Naive thymus-derived CD4-positive, alpha-beta T cell (primary cell): ENCODE measurements at regions of chr11 and their contacts with region 1.

Region 1: DNA sequence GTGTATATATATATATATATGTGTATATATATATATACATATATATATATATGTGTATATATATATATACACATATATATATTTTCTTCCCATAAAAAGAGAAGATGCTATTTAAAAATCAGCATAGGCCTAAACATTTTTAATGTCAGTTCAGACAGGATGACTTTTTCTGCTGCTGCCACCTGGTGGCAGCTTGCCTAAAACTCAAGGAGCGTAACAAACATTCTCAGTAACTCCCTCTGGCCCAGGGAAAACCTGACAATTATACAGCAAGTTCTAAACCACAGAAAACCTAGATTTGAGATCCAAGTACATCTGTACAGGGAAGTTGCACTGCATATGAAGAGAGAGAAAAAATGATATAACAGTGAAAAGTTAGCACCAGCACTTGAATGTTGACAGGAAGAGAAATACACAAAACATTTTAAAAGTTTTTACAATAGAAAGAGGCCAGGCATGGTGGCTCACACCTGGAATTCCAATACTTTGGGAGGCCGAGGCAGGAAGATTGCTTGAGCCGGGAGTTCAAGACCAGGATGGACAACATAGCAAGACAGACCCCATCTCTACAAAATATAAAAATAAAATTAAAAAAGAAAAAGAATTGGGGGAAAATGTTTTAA is 16.6 kb downstream of the OR8A1 start:
- DNase-seq: peak in 7 of 9 donors; percentile 7 to 35 (median 24)
- ATAC-seq: peak; percentile 45
- H3K4me3 ChIP-seq: no peak overlapping the region
- H3K4me3 Mint-ChIP-seq: no peak overlapping the region
- H3K27ac ChIP-seq: no peak overlapping the region
- H3K27ac Mint-ChIP-seq: no peak overlapping the region
- H3K4me1 ChIP-seq: no peaks in the 10 kb centered on the region
- H3K4me1 Mint-ChIP-seq: peaks cover 0 to 2% (median 0%) of the 10 kb centered on the region in 7 donors
- H3K27me3 ChIP-seq: no peaks in the 10 kb centered on the region
- H3K27me3 Mint-ChIP-seq: peaks cover 17 to 39% (median 27%) of the 10 kb centered on the region in 5 donors

Region 2: GRCh38 chr11:124108156-124108555 is 478.2 kb before region 1 on chr11:
- CTCF ChIA-PET with region 1: no interaction called
- POLR2A ChIA-PET with region 1: no interaction called
- intact Hi-C with region 1: loop called in 1 of 2 experiments (anchors 1 kb)
- DNase-seq: peak in 2 of 9 donors; percentile 7
- ATAC-seq: peak; percentile 38
- H3K4me3 ChIP-seq: no peak overlapping the region
- H3K4me3 Mint-ChIP-seq: no peak overlapping the region
- H3K27ac ChIP-seq: no peak overlapping the region
- H3K27ac Mint-ChIP-seq: no peak overlapping the region
- H3K4me1 ChIP-seq: no peaks in the 10 kb centered on the region
- H3K4me1 Mint-ChIP-seq: peaks cover 0 to 2% (median 0%) of the 10 kb centered on the region in 7 donors
- H3K27me3 ChIP-seq: no peaks in the 10 kb centered on the region
- H3K27me3 Mint-ChIP-seq: peaks cover 28 to 64% (median 38%) of the 10 kb centered on the region in 5 donors